Aorta (tissue), 5 donors: ENCODE measurements at regions of chr17 and their contacts with region 1.

Region 1: DNA sequence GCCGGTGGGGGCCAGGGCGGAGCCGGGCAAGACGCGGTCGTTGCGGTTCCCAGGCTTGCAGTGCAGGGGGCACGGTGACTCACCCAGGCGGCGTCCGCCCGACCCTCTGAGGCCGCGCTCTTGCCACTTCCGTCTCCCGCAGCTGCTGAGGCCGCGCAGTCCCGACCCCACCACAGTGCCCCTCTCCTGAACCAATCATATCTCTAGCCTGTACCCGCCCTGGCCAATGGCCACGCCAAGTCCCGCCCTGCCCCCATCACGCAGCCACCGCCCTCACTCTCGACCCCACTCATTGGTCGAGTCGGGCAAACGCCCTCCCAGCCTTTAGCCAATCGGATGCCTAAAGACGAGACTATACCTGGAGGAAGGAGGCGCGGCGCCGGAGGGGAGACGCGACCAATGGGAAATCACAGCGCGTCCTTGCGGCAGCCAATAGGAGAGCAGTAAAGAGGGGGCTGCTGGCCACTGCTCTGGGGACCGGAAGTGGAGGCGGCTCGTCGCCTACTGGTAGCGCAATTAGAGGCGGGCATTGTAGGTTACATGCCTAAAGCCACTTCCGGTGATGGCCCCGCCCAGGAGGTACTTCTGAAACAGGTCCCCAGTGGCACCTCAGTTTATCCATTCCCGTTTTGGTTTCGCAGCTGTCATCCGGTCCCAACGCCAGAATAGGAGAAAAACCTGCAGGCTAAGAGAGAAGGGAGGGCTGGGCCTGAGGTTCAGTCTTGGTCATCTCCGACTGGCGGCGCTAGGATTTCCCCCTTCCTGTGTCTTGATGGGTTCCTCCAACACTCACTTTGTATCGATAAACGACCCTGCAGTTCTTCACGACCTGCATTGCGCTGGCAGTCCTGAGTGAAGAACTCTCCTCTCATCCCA is 3.5 kb upstream of the MTMR4 start:
- DNase-seq: peak; percentile 100
- ATAC-seq: peak; percentile 95
- H3K4me3 ChIP-seq: peak overlapping the region; percentile 55 to 62
- H3K27ac ChIP-seq: peak overlapping the region; percentile 24 to 88
- H3K4me1 ChIP-seq: no peaks in the 10 kb centered on the region
- H3K27me3 ChIP-seq: no peaks in the 10 kb centered on the region

Region 2: GRCh38 chr17:58270476-58271215 is 247.3 kb before region 1 on chr17:
- intact Hi-C with region 1: no loop called
- DNase-seq: no peak
- ATAC-seq: no peak
- H3K4me3 ChIP-seq: no peak overlapping the region
- H3K27ac ChIP-seq: no peak overlapping the region
- H3K4me1 ChIP-seq: no peaks in the 10 kb centered on the region
- H3K27me3 ChIP-seq: no peaks in the 10 kb centered on the region

Region 3: GRCh38 chr17:58587702-58588254 is 69.8 kb after region 1 on chr17:
- intact Hi-C with region 1: loop called in 1 of 2 experiments (anchors 2 kb)
- DNase-seq: peak; percentile 55 to 78
- ATAC-seq: peak; percentile 68
- H3K4me3 ChIP-seq: no peak overlapping the region
- H3K27ac ChIP-seq: no peak overlapping the region
- H3K4me1 ChIP-seq: no peaks in the 10 kb centered on the region
- H3K27me3 ChIP-seq: no peaks in the 10 kb centered on the region

Region 4: GRCh38 chr17:58631523-58632323 is 113.8 kb after region 1 on chr17:
- intact Hi-C with region 1: loop called (anchors 1 to 5 kb)
- DNase-seq: peak; percentile 97 to 98
- ATAC-seq: peak; percentile 97
- H3K4me3 ChIP-seq: peak overlapping the region; percentile 6 to 86
- H3K27ac ChIP-seq: peak overlapping the region; percentile 69 to 74
- H3K4me1 ChIP-seq: no peaks in the 10 kb centered on the region
- H3K27me3 ChIP-seq: peaks cover 0 to 2% of the 10 kb centered on the region in 2 donors

Region 5: GRCh38 chr17:58692239-58693055 is 174.5 kb after region 1 on chr17 and contains the start of gene RAD51C:
- intact Hi-C with region 1: loop called (anchors 5 to 10 kb)
- DNase-seq: peak; percentile 92 to 93
- ATAC-seq: peak; percentile 96
- H3K4me3 ChIP-seq: peak within 1 kb of the TSS; percentile 36 to 73
- H3K27ac ChIP-seq: peak within 1 kb of the TSS; percentile 23 to 66
- H3K4me1 ChIP-seq: no peaks in the 10 kb centered on the region
- H3K27me3 ChIP-seq: no peaks in the 10 kb centered on the region
- total RNA-seq, gene RAD51C: 21.0 to 25.0 TPM

Region 6: DNA sequence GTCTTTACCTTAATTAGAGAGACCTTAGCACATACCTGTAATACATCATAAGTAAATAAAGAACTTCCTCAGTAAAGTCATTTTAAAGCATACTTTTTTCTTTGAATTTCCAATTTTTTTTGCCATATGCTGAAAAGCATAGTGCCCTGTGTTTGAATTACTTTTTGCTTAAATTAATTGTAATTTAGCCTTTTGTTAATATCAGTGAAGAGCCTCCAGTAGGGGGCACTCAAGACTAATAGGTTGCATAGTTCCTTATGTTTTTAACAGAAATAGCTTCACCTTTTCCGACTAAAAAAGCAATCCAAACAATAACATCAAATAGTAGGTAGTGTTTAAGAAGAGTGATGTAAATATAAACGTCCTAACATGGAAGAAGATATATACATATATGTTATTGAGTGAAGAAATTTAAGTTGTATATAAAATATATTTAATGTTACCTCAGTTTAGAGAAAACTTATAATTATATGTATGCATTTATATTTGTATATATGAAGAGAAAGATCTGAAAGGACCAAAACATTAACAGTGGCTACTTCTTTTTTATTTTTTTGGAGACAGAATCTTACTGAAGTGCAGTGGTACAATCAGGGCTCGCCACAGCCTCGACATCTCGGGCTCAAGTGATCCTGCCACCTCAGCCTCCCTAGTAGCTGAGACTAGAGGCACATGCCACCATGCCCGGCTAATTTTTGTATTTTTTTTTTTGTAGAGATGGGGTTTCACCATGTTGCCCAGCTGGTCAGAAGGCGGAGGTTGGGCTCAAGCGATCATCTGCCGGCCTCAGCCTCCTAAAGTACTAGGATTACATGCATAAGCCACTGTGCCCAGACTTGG is 193.2 kb after region 1 on chr17:
- intact Hi-C with region 1: no loop called
- DNase-seq: no peak
- ATAC-seq: no peak
- H3K4me3 ChIP-seq: no peak overlapping the region
- H3K27ac ChIP-seq: no peak overlapping the region
- H3K4me1 ChIP-seq: no peaks in the 10 kb centered on the region
- H3K27me3 ChIP-seq: no peaks in the 10 kb centered on the region

Region 7: GRCh38 chr17:59004338-59005111 is 486.6 kb after region 1 on chr17:
- intact Hi-C with region 1: loop called (anchors 5 kb)
- DNase-seq: peak in 1 of 2 donors; percentile 51
- ATAC-seq: peak; percentile 87
- H3K4me3 ChIP-seq: no peak overlapping the region
- H3K27ac ChIP-seq: no peak overlapping the region
- H3K4me1 ChIP-seq: no peaks in the 10 kb centered on the region
- H3K27me3 ChIP-seq: no peaks in the 10 kb centered on the region

Region 8: DNA sequence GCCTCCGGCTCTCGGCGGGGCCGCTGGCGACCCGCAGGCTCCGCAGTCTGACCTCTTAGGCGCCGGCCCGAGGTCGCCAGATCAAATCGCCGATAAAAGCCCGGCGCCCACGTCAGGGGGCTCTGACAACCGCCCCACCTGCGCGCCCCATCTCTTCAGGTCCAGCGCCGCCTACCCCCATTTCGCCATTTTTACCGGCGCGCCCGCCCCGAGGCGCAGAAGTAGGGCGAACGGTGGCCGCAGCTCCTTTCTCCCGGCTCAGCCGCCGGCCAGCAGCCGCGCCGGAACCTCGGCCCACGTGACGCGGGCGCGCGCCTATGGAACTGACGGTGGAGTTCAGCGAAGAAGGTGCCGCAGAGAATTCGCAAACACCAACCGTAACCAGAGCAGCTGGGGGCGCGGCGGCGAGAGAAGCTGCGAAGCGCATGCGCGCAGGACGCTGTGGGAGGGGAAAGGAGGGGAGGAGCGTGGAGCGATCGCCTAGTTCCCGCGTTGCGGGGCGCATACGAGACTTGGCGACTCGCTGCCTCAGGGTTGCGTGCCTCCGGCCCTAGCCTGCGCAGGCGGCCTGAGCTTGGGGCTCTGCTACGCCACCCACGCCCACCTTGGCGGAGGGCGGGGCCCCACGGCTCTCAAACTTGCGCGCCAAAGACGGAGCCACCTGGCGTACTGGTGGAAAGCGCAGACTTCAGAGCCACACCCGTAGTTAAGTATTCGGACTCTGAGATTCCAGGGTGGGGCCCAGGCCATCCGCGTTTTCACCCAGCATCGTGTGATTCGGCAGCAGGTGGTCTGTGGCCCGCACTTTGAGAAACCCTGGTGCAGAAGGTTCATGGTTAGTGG is 588.7 kb after region 1 on chr17 and contains the start of gene TRIM37:
- intact Hi-C with region 1: loop called in 1 of 2 experiments (anchors 2 kb)
- DNase-seq: peak; percentile 99 to 100
- ATAC-seq: peak; percentile 100
- H3K4me3 ChIP-seq: peak within 1 kb of the TSS; percentile 59 to 60
- H3K27ac ChIP-seq: peak within 1 kb of the TSS in 1 of 2 donors; percentile 62
- H3K4me1 ChIP-seq: no peaks in the 10 kb centered on the region
- H3K27me3 ChIP-seq: no peaks in the 10 kb centered on the region
- total RNA-seq, gene TRIM37: 17.3 to 23.8 TPM